ENCODE measurements at regions of chr4 and their contacts with region 1.

Region 1: GRCh38 chr4:82739316-82740179 is 59.0 kb downstream of the SCD5 start:
- DNase-seq: peak; percentile 71 to 89 (median 86)
- ATAC-seq: peak; percentile 100
- H3K4me3 ChIP-seq: no peak overlapping the region
- H3K27ac ChIP-seq: no peak overlapping the region
- H3K4me1 ChIP-seq: 0 out of 5 replicates have a peak, but pooled peaks cover 0 to 2% of the 10 kb centered on the region in 2 experiments
- H3K27me3 ChIP-seq: peaks cover 4 to 26% of the 10 kb centered on the region in 2 experiments; a peak in 4 of 5 replicates
- CTCF ChIP-seq: peak; percentile 98 to 100 (median 99)
- EP300 ChIP-seq: no peak
- POLR2A ChIP-seq: no peak
- RAD21 ChIP-seq: peak; percentile 75 to 83

Region 2: GRCh38 chr4:82469791-82470345 is 269.7 kb before region 1 on chr4:
- CTCF ChIA-PET with region 1: no interaction called
- POLR2A ChIA-PET with region 1: no interaction called
- in situ Hi-C with region 1: loop called (anchors 5 kb)
- intact Hi-C with region 1: no loop called
- DNase-seq: peak in 1 of 4 experiments; percentile 12
- ATAC-seq: peak; percentile 59; the same call in 2 of the 3 replicates
- H3K4me3 ChIP-seq: no peak overlapping the region
- H3K27ac ChIP-seq: no peak overlapping the region
- H3K4me1 ChIP-seq: no peaks in the 10 kb centered on the region; a peak in 1 of 5 replicates
- H3K27me3 ChIP-seq: no peaks in the 10 kb centered on the region
- CTCF ChIP-seq: peak in 2 of 3 experiments; percentile 3 to 7; a peak in 2 of 6 replicates
- EP300 ChIP-seq: no peak
- POLR2A ChIP-seq: no peak
- RAD21 ChIP-seq: no peak

Measured in K562 (cell line).